ENCODE measurements at regions of chr10 and their contacts with region 1.

Region 1: DNA sequence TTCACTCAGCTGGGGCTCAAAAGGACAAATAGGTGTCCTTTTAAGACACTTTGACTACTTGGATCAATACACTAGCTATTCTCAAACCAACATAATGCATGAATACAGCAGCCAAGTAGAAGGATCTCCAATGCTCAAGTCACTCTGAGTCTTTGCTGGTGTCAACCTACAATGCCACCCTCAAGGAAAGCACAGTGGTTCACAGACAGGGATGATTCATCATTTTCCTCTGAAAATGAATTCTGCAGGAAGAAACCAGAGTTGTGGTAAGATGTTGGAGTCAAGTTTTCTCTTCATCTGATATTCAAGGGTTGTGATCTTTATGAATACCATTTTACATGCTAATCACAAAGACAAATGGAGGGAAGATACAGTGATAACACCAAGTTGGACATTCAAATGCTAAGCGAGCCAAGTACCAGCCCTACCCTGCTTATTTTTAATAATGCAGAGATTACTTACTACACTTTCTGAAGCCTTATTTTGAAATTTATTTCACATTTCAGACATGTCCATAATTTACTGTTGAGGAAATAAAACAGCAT is 143.1 kb upstream of the FGFR2 start:
- DNase-seq: no peak
- H3K4me3 ChIP-seq: no peak overlapping the region
- H3K27ac ChIP-seq: no peak overlapping the region
- H3K4me1 ChIP-seq: peaks cover 15% of the 10 kb centered on the region
- H3K27me3 ChIP-seq: no peaks in the 10 kb centered on the region
- CTCF ChIP-seq: no peak
- POLR2A ChIP-seq: no peak

Region 2: DNA sequence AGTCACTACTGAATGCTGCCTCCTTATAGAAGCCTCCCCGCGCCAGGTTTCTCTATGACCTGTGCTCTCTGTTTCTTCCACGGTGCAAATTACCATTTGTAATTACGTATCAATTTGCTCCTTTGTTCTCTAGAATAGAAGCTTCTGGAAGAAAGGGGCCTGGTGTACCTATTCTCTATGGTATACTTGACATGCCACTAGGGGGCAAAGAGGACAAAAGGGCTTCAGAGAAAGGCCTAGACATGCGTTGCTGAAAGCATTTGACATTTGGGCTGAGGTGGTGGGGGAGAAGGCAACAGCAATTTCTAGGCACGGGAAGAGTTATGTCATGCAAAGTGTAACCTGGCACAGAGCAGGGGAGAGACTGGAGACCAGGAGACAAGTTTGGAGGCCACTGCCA is 741.5 kb before region 1 on chr10:
- CTCF ChIA-PET with region 1: no interaction called
- POLR2A ChIA-PET with region 1: interaction called, 12 read pairs
- dilution Hi-C with region 1: no loop called
- intact Hi-C with region 1: no loop called
- DNase-seq: no peak
- H3K4me3 ChIP-seq: no peak overlapping the region
- H3K27ac ChIP-seq: no peak overlapping the region
- H3K4me1 ChIP-seq: no peaks in the 10 kb centered on the region
- H3K27me3 ChIP-seq: no peaks in the 10 kb centered on the region
- CTCF ChIP-seq: no peak
- POLR2A ChIP-seq: no peak

Measured in endothelial cell of umbilical vein (primary cell).